Naive thymus-derived CD4-positive, alpha-beta T cell (primary cell): ENCODE measurements at regions of chr1 and their contacts with region 1.

Region 1: DNA sequence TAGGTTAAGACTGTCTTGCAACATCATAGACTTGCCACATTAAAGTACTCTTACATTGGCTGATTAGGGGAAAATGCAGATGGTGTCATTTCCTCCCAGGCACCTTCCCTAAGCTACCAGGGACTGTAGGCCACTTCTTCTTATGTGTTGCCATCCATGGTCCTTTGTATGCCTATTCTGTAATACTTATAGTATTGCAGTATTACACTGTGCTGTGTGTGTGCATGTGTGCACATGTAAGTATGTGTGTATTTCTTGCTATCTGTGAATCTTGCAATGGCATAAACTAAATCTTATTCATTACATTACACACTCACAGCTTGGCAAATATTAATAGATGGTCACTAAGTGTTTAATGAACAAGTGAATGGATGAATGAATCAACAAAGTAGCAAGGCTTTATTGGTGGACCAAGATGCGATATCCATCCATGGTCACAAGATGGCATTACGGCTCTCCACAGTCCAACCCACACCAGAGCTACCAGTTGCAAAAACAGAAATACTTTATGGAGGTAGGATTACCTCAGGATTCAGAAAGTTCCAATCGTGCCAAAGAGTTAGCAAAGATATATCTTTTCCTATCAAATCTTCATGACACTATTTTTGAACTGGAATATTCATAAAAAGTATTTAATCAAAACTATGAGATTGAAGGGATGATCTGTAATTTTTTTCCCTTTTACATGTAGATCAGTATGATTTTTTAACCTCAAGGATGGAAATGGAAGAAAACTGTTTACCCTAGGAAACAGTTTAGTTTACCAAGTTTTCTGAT is 160.2 kb downstream of the DENND1B start:
- DNase-seq: peak in 5 of 9 donors; percentile 0 to 27 (median 8)
- ATAC-seq: peak; percentile 55
- H3K4me3 ChIP-seq: no peak overlapping the region
- H3K4me3 Mint-ChIP-seq: no peak overlapping the region
- H3K27ac ChIP-seq: no peak overlapping the region
- H3K27ac Mint-ChIP-seq: peak overlapping the region in 1 of 9 donors; percentile 65
- H3K4me1 ChIP-seq: no peaks in the 10 kb centered on the region
- H3K4me1 Mint-ChIP-seq: peaks cover 0 to 4% (median 0%) of the 10 kb centered on the region in 7 donors
- H3K27me3 ChIP-seq: no peaks in the 10 kb centered on the region
- H3K27me3 Mint-ChIP-seq: no peaks in the 10 kb centered on the region

Region 2: GRCh38 chr1:197595304-197595904 is 19.7 kb before region 1 on chr1:
- CTCF ChIA-PET with region 1: no interaction called
- POLR2A ChIA-PET with region 1: no interaction called
- intact Hi-C with region 1: no loop called
- DNase-seq: no peak
- ATAC-seq: no peak
- H3K4me3 ChIP-seq: no peak overlapping the region
- H3K4me3 Mint-ChIP-seq: no peak overlapping the region
- H3K27ac ChIP-seq: no peak overlapping the region
- H3K27ac Mint-ChIP-seq: no peak overlapping the region
- H3K4me1 ChIP-seq: no peaks in the 10 kb centered on the region
- H3K4me1 Mint-ChIP-seq: peaks cover 0 to 3% (median 0%) of the 10 kb centered on the region in 7 donors
- H3K27me3 ChIP-seq: no peaks in the 10 kb centered on the region
- H3K27me3 Mint-ChIP-seq: no peaks in the 10 kb centered on the region

Region 3: DNA sequence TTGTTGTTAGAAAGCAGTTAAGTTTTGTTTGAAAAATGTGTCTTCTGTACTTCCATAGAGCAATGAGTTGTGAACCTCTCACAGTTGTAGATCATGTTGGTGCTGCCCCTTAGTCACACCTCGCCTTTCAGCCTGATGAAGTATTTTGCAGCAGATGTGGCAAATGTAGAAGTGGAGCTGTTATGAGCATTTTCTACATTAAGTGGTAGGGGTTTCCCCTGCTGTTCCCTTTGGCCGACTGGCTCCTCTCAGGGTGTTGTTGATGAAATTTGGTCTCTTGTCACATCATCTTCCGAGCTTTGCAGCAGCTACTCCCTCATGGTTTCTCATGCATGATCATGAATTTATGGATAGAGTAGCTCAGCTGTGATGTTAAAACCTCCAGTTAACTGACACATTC is 193.8 kb after region 1 on chr1:
- CTCF ChIA-PET with region 1: no interaction called
- POLR2A ChIA-PET with region 1: no interaction called
- intact Hi-C with region 1: no loop called
- DNase-seq: no peak
- ATAC-seq: peak; percentile 49
- H3K4me3 ChIP-seq: no peak overlapping the region
- H3K4me3 Mint-ChIP-seq: no peak overlapping the region
- H3K27ac ChIP-seq: no peak overlapping the region
- H3K27ac Mint-ChIP-seq: peak overlapping the region in 1 of 9 donors; percentile 37
- H3K4me1 ChIP-seq: peaks cover 0 to 4% of the 10 kb centered on the region in 2 donors
- H3K4me1 Mint-ChIP-seq: peaks cover 0 to 5% (median 0%) of the 10 kb centered on the region in 7 donors
- H3K27me3 ChIP-seq: no peaks in the 10 kb centered on the region
- H3K27me3 Mint-ChIP-seq: no peaks in the 10 kb centered on the region

Region 4: GRCh38 chr1:198096390-198096789 is 481.3 kb after region 1 on chr1:
- CTCF ChIA-PET with region 1: no interaction called
- POLR2A ChIA-PET with region 1: no interaction called
- intact Hi-C with region 1: loop called in 1 of 2 experiments (anchors 10 kb)
- DNase-seq: no peak
- ATAC-seq: no peak
- H3K4me3 ChIP-seq: no peak overlapping the region
- H3K4me3 Mint-ChIP-seq: no peak overlapping the region
- H3K27ac ChIP-seq: no peak overlapping the region
- H3K27ac Mint-ChIP-seq: no peak overlapping the region
- H3K4me1 ChIP-seq: peaks cover 0 to 4% of the 10 kb centered on the region in 2 donors
- H3K4me1 Mint-ChIP-seq: peaks cover 0 to 6% (median 2%) of the 10 kb centered on the region in 7 donors
- H3K27me3 ChIP-seq: no peaks in the 10 kb centered on the region
- H3K27me3 Mint-ChIP-seq: peaks cover 0 to 10% (median 0%) of the 10 kb centered on the region in 5 donors

Region 5: DNA sequence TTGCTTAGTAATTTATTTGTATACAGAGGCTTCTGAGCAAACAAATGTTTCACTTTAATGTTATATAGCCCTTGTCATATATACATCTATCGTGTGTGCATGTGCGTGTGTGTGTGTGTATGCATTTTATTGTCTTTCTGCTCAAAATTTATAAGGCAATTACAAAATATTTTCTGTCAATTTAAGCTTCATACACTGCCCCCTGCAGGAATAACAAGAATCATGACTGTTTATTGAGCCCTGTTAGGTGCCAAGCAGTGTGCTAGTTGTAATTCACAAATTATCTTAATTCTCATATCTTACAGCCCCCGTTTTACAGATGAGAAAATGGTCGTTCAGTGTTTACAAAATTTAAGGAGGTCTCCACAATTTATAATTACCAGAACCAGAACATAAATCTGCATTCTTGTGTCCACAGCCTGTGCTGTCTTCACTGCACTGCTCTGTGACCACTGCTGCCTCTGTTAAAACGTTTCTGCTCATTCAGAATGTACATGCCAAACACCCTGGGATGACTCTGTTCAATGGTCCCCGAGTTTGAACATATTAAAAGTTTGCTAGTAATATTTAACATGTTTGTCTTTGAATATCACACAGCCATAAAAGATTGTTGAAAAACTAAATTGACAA is 744.0 kb after region 1 on chr1:
- CTCF ChIA-PET with region 1: interaction called, 3 read pairs
- POLR2A ChIA-PET with region 1: no interaction called
- intact Hi-C with region 1: loop called in 1 of 2 experiments (anchors 2 kb)
- DNase-seq: peak in 5 of 9 donors; percentile 3 to 17 (median 7)
- ATAC-seq: no peak
- H3K4me3 ChIP-seq: no peak overlapping the region
- H3K4me3 Mint-ChIP-seq: no peak overlapping the region
- H3K27ac ChIP-seq: no peak overlapping the region
- H3K27ac Mint-ChIP-seq: no peak overlapping the region
- H3K4me1 ChIP-seq: no peaks in the 10 kb centered on the region
- H3K4me1 Mint-ChIP-seq: peaks cover 0 to 3% (median 0%) of the 10 kb centered on the region in 7 donors
- H3K27me3 ChIP-seq: no peaks in the 10 kb centered on the region
- H3K27me3 Mint-ChIP-seq: peaks cover 0 to 21% (median 3%) of the 10 kb centered on the region in 5 donors